ENCODE measurements at regions of chr1 and their contacts with region 1.

Region 1: DNA sequence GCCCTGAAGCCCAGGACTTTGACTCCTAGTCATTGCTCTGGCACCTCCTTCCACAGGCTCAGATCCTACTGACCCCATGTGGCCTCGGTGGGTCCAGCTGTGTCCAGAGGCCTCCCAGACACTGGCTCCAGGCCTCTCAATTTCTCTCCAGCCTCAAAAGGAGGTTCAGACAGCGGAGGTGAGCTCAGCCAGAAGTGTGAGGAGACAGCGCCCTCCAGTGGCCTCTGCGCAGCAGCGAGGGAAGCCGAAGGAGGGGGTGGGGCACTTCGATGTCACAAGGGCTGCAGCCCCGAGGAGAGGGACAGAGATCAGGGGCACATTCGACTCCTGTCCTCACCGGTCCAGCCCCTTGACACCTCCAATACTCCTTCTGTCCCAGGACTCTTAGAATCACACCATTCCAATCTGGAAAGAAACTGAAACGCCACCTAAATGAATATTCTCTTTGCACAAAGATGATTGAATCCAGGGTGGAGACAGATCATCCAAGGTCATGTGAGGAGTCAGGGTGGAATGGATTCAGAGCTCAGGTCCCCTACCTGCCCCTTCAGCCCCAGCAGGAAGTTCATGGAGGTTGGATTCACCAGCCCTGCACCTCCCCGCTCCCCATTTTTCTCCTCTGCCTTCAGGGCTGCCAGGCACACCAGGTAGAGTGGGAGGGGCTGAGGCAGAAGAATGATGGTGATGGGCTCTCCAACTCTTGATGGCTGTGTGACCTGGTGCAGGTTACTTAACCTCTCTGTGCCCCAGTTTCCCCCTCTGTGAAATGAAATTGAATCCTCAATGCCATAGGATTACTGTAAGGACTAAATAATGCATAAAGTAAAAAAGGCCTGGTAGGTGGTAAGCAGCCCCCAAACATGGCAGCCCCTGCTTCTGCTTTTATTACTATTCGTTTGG is 34.8 kb upstream of the ZBTB40 start:
- DNase-seq: peak; percentile 61 to 93
- H3K4me3 ChIP-seq: no peak overlapping the region
- CTCF ChIP-seq: peak in 1 of 3 donors; percentile 32
- POLR2A ChIP-seq: no peak

Region 2: GRCh38 chr1:21963477-21964217 is 453.2 kb before region 1 on chr1:
- intact Hi-C with region 1: no loop called
- DNase-seq: peak; percentile 75 to 96
- H3K4me3 ChIP-seq: no peak overlapping the region
- CTCF ChIP-seq: peak in 1 of 3 donors; percentile 82
- POLR2A ChIP-seq: no peak

Region 3: GRCh38 chr1:22105611-22106207 is 311.1 kb before region 1 on chr1:
- intact Hi-C with region 1: loop called (anchors 10 kb)
- DNase-seq: no peak
- H3K4me3 ChIP-seq: no peak overlapping the region
- CTCF ChIP-seq: peak in 1 of 3 donors; percentile 63
- POLR2A ChIP-seq: no peak

Region 4: GRCh38 chr1:22121411-22121911 is 295.3 kb before region 1 on chr1:
- intact Hi-C with region 1: loop called (anchors 10 kb)
- DNase-seq: peak in 1 of 2 donors; percentile 82
- H3K4me3 ChIP-seq: no peak overlapping the region
- CTCF ChIP-seq: no peak
- POLR2A ChIP-seq: no peak

Region 5: GRCh38 chr1:22259551-22260282 is 157.1 kb before region 1 on chr1:
- intact Hi-C with region 1: no loop called
- DNase-seq: no peak
- H3K4me3 ChIP-seq: no peak overlapping the region
- CTCF ChIP-seq: no peak
- POLR2A ChIP-seq: no peak

Region 6: GRCh38 chr1:22641906-22642636 is 225.3 kb after region 1 on chr1:
- intact Hi-C with region 1: loop called (anchors 2 kb)
- DNase-seq: peak; percentile 78 to 95
- H3K4me3 ChIP-seq: no peak overlapping the region
- CTCF ChIP-seq: no peak
- POLR2A ChIP-seq: no peak

Measured in lower leg skin (tissue), 4 donors.